B cell (primary cell): ENCODE measurements at regions of chr2 and their contacts with region 1.

Region 1: GRCh38 chr2:37324786-37325624 is at the start of gene PRKD3:
- DNase-seq: peak; percentile 89
- ATAC-seq: peak; percentile 81
- H3K4me3 ChIP-seq: peak within 1 kb of the TSS; percentile 82 to 91 (median 86)
- H3K4me3 Mint-ChIP-seq: peak within 1 kb of the TSS; percentile 100
- H3K27ac ChIP-seq: peak within 1 kb of the TSS; percentile 80 to 88
- H3K27ac Mint-ChIP-seq: peak within 1 kb of the TSS; percentile 97
- H3K4me1 ChIP-seq: peaks cover 29 to 37% of the 10 kb centered on the region in 2 donors
- H3K4me1 Mint-ChIP-seq: peaks cover 38% of the 10 kb centered on the region
- H3K27me3 ChIP-seq: no peaks in the 10 kb centered on the region
- H3K27me3 Mint-ChIP-seq: peaks cover 3% of the 10 kb centered on the region
- CTCF ChIP-seq: no peak
- total RNA-seq, gene PRKD3: 82.2 and 83.4 TPM in 2 replicates

Region 2: DNA sequence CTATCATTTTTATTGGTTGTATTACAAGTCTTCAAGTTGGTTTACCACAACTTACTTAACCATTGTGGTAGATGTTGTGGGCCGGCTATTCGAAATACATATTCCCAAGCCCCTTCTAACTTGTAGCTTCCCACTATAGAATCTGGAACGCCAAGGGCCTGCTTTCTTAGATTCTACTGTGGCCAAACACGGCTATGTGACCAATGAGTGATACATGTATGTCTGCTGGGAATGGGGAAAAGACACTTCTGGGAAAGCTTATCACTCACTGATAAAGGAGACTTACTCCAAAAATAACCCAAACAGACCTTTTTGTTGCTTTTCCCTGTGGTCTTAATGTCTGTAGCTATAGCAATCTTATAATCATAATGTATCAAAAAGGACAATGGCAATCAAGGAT is 383.1 kb before region 1 on chr2:
- CTCF ChIA-PET with region 1: no interaction called
- POLR2A ChIA-PET with region 1: no interaction called
- intact Hi-C with region 1: no loop called
- DNase-seq: no peak
- ATAC-seq: no peak
- H3K4me3 ChIP-seq: no peak overlapping the region
- H3K4me3 Mint-ChIP-seq: no peak overlapping the region
- H3K27ac ChIP-seq: no peak overlapping the region
- H3K27ac Mint-ChIP-seq: no peak overlapping the region
- H3K4me1 ChIP-seq: no peaks in the 10 kb centered on the region
- H3K4me1 Mint-ChIP-seq: no peaks in the 10 kb centered on the region
- H3K27me3 ChIP-seq: no peaks in the 10 kb centered on the region
- H3K27me3 Mint-ChIP-seq: no peaks in the 10 kb centered on the region
- CTCF ChIP-seq: no peak

Region 3: DNA sequence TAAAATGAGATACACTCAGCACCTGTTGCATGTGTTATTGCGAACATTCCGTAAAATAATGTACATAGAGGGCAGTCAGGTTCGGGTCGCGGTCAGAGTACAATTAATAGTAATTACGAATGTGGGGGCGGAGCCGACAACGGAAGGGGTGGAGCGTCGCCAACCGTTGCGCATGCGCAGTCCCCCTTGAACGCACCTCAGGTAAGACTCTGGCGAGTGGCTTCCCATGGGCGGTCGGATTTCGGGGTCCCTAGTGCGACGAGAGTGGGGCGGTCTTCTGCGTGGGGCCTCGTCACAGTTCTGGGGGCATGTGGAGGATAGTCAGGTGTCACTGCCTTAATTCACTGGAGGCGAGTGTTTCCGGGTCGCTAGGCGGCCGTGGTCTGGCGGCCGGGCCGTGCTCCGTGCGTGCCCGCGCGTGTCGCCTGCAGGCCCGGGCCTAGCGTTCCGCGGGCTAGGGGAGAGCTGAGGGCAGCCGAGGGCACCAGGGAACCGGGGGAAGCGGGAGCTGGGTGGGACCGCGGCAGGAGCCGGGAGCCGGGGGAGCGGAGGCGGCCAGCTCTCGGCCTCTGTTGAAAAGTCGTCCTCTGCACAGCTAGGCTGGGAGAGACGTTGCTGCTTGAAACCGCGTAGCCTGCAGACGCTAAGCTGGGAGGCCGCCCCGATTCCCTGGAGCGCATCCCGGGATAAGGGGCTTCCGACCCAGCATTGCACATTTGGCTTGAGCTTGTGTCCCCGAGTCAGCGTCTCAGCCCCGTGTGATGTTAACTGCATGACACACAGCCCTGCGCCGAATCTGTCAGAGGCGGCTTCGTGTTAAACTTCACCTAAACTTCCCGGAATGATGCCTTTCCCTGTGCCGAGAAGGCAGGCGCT is 128.4 kb before region 1 on chr2 and contains the start of gene CEBPZOS:
- CTCF ChIA-PET with region 1: no interaction called
- POLR2A ChIA-PET with region 1: no interaction called
- intact Hi-C with region 1: loop called (anchors 1 kb)
- DNase-seq: peak; percentile 94
- ATAC-seq: peak; percentile 89
- H3K4me3 ChIP-seq: peak within 1 kb of the TSS; percentile 70 to 87 (median 80)
- H3K4me3 Mint-ChIP-seq: peak within 1 kb of the TSS; percentile 98
- H3K27ac ChIP-seq: peak within 1 kb of the TSS; percentile 78 to 81
- H3K27ac Mint-ChIP-seq: peak within 1 kb of the TSS; percentile 99
- H3K4me1 ChIP-seq: peaks cover 16 to 24% of the 10 kb centered on the region in 2 donors
- H3K4me1 Mint-ChIP-seq: peaks cover 22% of the 10 kb centered on the region
- H3K27me3 ChIP-seq: no peaks in the 10 kb centered on the region
- H3K27me3 Mint-ChIP-seq: no peaks in the 10 kb centered on the region
- CTCF ChIP-seq: no peak
- total RNA-seq, gene CEBPZOS: 36.7 and 38.0 TPM in 2 replicates

Region 4: DNA sequence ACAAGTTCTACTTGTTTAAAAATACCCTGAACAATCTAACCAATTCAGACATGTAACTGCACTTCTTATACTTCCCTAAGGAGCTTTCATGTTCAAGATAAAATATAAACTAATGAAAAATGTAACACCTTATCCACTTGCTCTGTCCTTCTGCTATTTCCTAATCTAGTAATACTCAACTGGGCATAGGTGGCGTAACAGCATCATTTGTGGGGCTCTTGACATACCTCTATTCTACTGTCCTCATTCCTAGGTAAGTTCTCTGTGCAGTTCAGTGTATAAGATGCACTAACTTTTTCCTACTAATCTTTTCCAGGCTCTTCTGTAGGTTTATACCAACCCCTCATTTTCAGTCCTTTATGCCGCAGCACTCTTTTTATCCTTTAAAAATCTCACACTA is 37.0 kb before region 1 on chr2:
- CTCF ChIA-PET with region 1: no interaction called
- POLR2A ChIA-PET with region 1: no interaction called
- intact Hi-C with region 1: loop called (anchors 2 kb)
- DNase-seq: peak; percentile 34
- ATAC-seq: peak; percentile 54
- H3K4me3 ChIP-seq: no peak overlapping the region
- H3K4me3 Mint-ChIP-seq: no peak overlapping the region
- H3K27ac ChIP-seq: no peak overlapping the region
- H3K27ac Mint-ChIP-seq: no peak overlapping the region
- H3K4me1 ChIP-seq: no peaks in the 10 kb centered on the region
- H3K4me1 Mint-ChIP-seq: peaks cover 14% of the 10 kb centered on the region
- H3K27me3 ChIP-seq: no peaks in the 10 kb centered on the region
- H3K27me3 Mint-ChIP-seq: no peaks in the 10 kb centered on the region
- CTCF ChIP-seq: no peak

Region 5: DNA sequence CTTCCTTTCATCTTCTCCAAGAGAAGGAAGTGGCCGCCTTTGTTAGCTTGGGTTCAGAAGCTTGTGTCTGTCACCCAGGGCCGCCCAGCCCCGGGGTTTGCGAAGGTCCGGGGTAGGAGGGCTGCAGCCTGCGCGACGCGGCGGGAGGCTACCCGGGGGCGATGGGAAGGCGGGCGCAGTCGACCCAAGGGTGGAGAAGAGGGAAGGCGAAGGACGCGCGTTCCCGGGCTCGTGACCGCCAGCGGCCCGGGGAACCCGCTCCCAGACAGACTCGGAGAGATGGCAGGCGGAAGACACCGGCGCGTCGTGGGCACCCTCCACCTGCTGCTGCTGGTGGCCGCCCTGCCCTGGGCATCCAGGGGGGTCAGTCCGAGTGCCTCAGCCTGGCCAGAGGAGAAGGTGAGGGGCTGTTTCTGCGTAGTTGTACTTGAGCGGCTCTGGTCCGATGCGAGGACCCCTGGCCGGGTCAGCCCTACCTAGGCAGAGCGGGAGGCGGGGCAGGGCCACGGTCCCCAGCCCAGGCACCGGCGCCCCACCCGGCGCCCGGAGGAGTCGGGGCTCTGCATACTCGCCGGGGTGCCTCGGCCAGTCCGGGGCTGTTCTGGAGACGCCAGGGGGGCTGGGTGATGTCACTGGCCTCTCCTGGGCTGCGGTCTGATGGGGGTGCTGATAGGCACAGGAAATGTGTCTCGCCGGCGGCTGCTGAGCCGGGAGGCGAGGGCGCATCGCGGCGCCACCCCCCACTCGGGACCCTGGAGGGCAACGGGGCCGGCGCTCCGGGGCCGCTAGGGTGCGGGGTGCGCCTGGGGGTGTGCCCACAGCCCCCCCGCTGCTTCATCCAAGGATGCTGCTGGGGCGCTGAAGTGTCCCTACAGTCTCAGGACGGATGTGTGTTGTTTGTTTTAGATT is 19.7 kb after region 1 on chr2 and contains the start of gene QPCT:
- CTCF ChIA-PET with region 1: interaction called, 5 read pairs
- POLR2A ChIA-PET with region 1: interaction called, 6 read pairs
- intact Hi-C with region 1: loop called (anchors 2 kb)
- DNase-seq: peak; percentile 79
- ATAC-seq: peak; percentile 78
- H3K4me3 ChIP-seq: peak within 1 kb of the TSS; percentile 50 to 79 (median 66)
- H3K4me3 Mint-ChIP-seq: peak within 1 kb of the TSS; percentile 91
- H3K27ac ChIP-seq: peak within 1 kb of the TSS in 1 of 2 donors; percentile 58
- H3K27ac Mint-ChIP-seq: peak within 1 kb of the TSS; percentile 80
- H3K4me1 ChIP-seq: peaks cover 23 to 25% of the 10 kb centered on the region in 2 donors
- H3K4me1 Mint-ChIP-seq: peaks cover 30% of the 10 kb centered on the region
- H3K27me3 ChIP-seq: peaks cover 0 to 4% (median 2%) of the 10 kb centered on the region in 4 experiments
- H3K27me3 Mint-ChIP-seq: peaks cover 5% of the 10 kb centered on the region
- CTCF ChIP-seq: peak; percentile 27
- total RNA-seq, gene QPCT: 2.1 and 2.6 TPM in 2 replicates

Region 6: DNA sequence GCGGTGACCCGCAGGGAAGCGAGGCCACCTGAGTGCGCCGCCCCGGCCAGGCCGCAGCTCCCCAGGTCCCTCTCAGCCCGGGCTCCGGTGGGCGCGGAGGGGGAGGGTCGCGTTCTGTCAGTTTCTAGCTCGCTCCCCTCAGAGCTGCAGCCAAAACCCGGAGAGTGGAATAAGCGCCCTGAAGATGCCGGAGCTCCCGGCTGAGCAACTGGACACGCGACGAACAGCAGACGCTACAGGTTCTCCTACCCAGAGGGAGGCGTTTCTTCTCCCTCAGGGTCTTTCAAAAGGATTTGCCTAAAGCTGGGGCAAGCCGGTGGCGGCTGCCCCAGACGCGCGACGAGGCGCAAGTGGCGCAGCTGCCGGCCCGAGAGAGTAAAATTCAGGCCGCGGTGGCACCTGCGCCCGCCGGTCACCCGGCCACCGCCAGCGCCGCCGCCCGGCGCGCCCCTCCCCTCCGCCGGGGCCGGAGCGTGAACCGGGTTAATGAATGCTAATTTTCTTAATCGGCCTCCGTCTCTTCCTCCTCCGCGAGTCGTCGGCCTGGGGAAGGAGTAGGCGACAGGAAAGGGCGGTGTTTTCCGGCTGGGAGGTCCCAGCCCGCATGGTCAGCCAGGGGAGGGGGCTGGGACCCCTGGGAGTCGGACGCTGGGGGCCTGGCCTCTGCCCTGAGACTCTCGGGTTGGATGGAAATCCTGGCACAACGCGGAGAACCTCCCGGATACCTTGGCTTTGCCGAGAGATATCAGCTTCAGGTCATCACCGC is 347.3 kb after region 1 on chr2:
- CTCF ChIA-PET with region 1: no interaction called
- POLR2A ChIA-PET with region 1: no interaction called
- intact Hi-C with region 1: loop called (anchors 5 kb)
- DNase-seq: peak; percentile 86
- ATAC-seq: peak; percentile 48
- H3K4me3 ChIP-seq: peak overlapping the region; percentile 44 to 92 (median 84)
- H3K4me3 Mint-ChIP-seq: peak overlapping the region; percentile 98
- H3K27ac ChIP-seq: peak overlapping the region; percentile 81 to 83
- H3K27ac Mint-ChIP-seq: peak overlapping the region; percentile 95
- H3K4me1 ChIP-seq: peaks cover 31 to 38% of the 10 kb centered on the region in 2 donors
- H3K4me1 Mint-ChIP-seq: peaks cover 52% of the 10 kb centered on the region
- H3K27me3 ChIP-seq: no peaks in the 10 kb centered on the region
- H3K27me3 Mint-ChIP-seq: no peaks in the 10 kb centered on the region
- CTCF ChIP-seq: no peak

Region 7: GRCh38 chr2:37795938-37796337 is 470.9 kb after region 1 on chr2:
- CTCF ChIA-PET with region 1: no interaction called
- POLR2A ChIA-PET with region 1: no interaction called
- intact Hi-C with region 1: no loop called
- DNase-seq: no peak
- ATAC-seq: no peak
- H3K4me3 ChIP-seq: no peak overlapping the region
- H3K4me3 Mint-ChIP-seq: no peak overlapping the region
- H3K27ac ChIP-seq: no peak overlapping the region
- H3K27ac Mint-ChIP-seq: no peak overlapping the region
- H3K4me1 ChIP-seq: peaks cover 9 to 11% of the 10 kb centered on the region in 2 donors
- H3K4me1 Mint-ChIP-seq: peaks cover 10% of the 10 kb centered on the region
- H3K27me3 ChIP-seq: no peaks in the 10 kb centered on the region
- H3K27me3 Mint-ChIP-seq: peaks cover 7% of the 10 kb centered on the region
- CTCF ChIP-seq: no peak